ENCODE measurements at regions of chr7 and their contacts with region 1.

Region 1: DNA sequence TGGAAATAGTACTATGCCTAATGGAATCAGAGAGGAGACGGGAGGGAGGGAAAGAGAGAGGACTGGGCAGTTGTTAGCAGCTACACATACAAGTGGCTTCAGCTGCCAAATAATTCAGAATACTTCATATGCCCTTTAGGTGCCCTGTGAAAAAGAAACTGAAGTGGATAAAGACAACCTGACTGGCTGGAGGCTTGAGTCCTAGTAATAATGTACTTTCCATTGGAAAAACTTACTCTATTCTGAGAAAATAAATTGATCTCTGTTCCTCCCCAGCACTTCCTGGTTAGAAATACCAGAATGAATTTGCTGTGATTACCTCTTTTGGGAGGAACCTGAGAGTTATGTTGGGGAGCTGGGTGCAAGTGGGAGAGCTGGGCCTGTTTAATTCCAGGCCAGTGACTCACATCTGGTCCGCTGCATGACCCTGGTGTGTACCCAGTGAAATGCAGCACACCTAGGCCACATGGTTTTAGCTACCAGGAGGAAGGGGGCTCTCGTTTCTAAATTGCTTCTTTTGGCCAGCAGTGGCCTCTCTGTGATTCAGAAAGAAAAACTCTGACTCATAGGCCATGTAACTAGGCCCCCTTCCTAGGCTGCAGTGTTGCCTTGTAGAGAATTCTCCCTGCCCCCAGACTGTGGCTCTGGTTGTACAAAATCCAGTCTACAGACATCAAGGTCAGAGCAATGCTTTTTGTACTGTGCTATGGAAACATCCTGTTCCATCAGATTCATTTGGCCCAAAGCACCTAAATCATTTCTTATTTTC is 6.5 kb downstream of the AGFG2 start:
- DNase-seq: peak; percentile 95
- ATAC-seq: peak; percentile 87
- H3K4me3 ChIP-seq: peak overlapping the region; percentile 17 to 39 (median 23); a peak in 5 of 6 replicates
- H3K27ac ChIP-seq: peak overlapping the region; percentile 94
- H3K4me1 ChIP-seq: peaks cover 91% of the 10 kb centered on the region
- H3K27me3 ChIP-seq: no peaks in the 10 kb centered on the region
- CTCF ChIP-seq: peak; percentile 44
- EP300 ChIP-seq: peak in 1 of 2 experiments; percentile 68; a peak in 2 of 4 replicates
- POLR2A ChIP-seq: peak in 1 of 2 experiments; percentile 58; a peak in 1 of 4 replicates
- RAD21 ChIP-seq: peak; percentile 29; the same call in 1 of the 2 replicates

Region 2: GRCh38 chr7:100489824-100490223 is 55.7 kb before region 1 on chr7:
- CTCF ChIA-PET with region 1: no interaction called
- POLR2A ChIA-PET with region 1: interaction called, 4 read pairs
- in situ Hi-C with region 1: no loop called
- intact Hi-C with region 1: loop called (anchors 1 kb)
- DNase-seq: peak; percentile 89
- ATAC-seq: peak; percentile 42
- H3K4me3 ChIP-seq: no peak overlapping the region
- H3K27ac ChIP-seq: no peak overlapping the region
- H3K4me1 ChIP-seq: peaks cover 60% of the 10 kb centered on the region
- H3K27me3 ChIP-seq: peaks cover 1 to 31% of the 10 kb centered on the region in 2 experiments
- CTCF ChIP-seq: no peak
- EP300 ChIP-seq: no peak
- POLR2A ChIP-seq: no peak
- RAD21 ChIP-seq: no peak

Region 3: GRCh38 chr7:100532165-100533022 is 13.2 kb before region 1 on chr7:
- CTCF ChIA-PET with region 1: no interaction called
- POLR2A ChIA-PET with region 1: interaction called, 4 read pairs
- in situ Hi-C with region 1: no loop called
- intact Hi-C with region 1: loop called (anchors 1 kb)
- DNase-seq: no peak
- ATAC-seq: no peak
- H3K4me3 ChIP-seq: no peak overlapping the region
- H3K27ac ChIP-seq: no peak overlapping the region
- H3K4me1 ChIP-seq: peaks cover 60% of the 10 kb centered on the region
- H3K27me3 ChIP-seq: no peaks in the 10 kb centered on the region
- CTCF ChIP-seq: no peak
- EP300 ChIP-seq: no peak
- POLR2A ChIP-seq: no peak
- RAD21 ChIP-seq: no peak

Region 4: DNA sequence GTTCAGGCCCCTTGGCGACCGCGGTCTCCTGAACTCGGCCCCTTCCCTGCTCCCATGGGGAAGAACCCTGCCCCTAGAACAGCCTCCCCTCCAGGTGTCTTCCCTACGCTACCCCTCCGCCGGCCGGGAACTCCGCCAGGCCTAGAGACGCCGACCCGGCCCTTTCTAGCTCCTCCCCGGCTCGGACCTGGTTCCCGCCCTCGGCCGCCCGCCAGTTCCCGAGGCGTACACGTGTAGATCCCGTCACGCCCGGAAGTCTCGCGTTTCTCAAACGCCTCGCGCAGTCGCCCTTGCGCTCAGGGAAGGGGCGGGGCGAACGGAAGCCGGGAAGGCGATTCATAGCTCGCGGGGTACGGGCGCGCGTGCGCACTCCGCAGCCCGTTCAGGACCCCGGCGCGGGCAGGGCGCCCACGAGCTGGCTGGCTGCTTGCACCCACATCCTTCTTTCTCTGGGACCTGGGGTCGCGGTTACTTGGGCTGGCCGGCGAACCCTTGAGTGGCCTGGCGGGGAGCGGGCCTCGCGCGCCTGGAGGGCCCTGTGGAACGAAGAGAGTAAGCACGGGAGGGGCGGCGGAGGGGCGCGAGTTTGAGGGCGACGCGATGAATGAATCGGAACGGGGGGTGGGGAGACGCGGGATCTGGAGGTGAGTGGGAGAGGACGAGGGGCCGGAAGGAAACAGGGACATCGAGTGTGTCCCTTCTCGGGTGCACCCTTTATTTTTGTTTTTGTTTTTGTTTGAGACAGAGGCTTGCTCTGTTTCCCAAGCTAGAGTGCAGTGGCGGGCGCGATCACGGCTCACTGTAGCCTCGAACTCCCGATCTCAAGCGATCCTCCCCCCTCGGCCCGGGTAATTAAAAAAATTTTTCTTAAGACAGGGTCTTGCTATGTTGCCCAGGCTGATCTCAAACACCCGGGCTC is 160.5 kb after region 1 on chr7 and contains the start of gene POP7:
- CTCF ChIA-PET with region 1: no interaction called
- POLR2A ChIA-PET with region 1: no interaction called
- in situ Hi-C with region 1: no loop called
- intact Hi-C with region 1: no loop called
- DNase-seq: peak; percentile 94
- ATAC-seq: peak; percentile 93
- H3K4me3 ChIP-seq: peak within 1 kb of the TSS; percentile 93 to 98 (median 98)
- H3K27ac ChIP-seq: peak within 1 kb of the TSS; percentile 84
- H3K4me1 ChIP-seq: peaks cover 30% of the 10 kb centered on the region
- H3K27me3 ChIP-seq: no peaks in the 10 kb centered on the region
- CTCF ChIP-seq: no peak
- EP300 ChIP-seq: no peak
- POLR2A ChIP-seq: peak; percentile 51 to 89
- RAD21 ChIP-seq: no peak
- total RNA-seq, gene POP7: 91.1 and 91.5 TPM in 2 replicates

Region 5: GRCh38 chr7:100914879-100915447 is 369.4 kb after region 1 on chr7:
- CTCF ChIA-PET with region 1: no interaction called
- POLR2A ChIA-PET with region 1: no interaction called
- in situ Hi-C with region 1: no loop called
- intact Hi-C with region 1: no loop called
- DNase-seq: no peak
- ATAC-seq: no peak
- H3K4me3 ChIP-seq: no peak overlapping the region
- H3K27ac ChIP-seq: no peak overlapping the region
- H3K4me1 ChIP-seq: peaks cover 19% of the 10 kb centered on the region
- H3K27me3 ChIP-seq: no peaks in the 10 kb centered on the region
- CTCF ChIP-seq: no peak
- EP300 ChIP-seq: no peak
- POLR2A ChIP-seq: no peak
- RAD21 ChIP-seq: no peak

Measured in HepG2 (cell line).